Posterior cingulate gyrus (tissue), 11 donors: ENCODE measurements at regions of chr21 and their contacts with region 1.

Region 1: GRCh38 chr21:32826329-32827167 is 55.0 kb upstream of the PAXBP1 start:
- DNase-seq: peak in 3 of 10 donors; percentile 28 to 43 (median 28)

Region 2: GRCh38 chr21:32653311-32653901 is 173.1 kb before region 1 on chr21:
- intact Hi-C with region 1: loop called (anchors 5 kb)
- DNase-seq: no peak

Region 3: DNA sequence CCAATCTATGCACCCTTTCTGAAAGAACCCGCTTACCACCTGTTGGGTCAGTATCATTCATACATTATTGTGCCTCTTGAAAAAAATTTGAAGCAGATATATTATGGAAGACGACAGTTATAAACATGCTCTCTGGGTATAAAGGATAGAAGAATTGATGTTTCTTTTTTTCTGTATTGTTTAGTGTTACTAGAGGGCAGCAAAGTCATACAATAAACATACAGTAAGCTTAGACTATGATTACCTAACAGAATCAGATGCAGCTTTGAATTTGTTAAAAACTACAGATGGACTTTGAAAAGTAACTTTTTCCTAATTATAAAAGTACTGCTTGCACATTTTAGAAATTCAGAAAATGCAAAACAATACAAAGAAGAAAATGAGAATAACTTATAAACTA is 43.9 kb before region 1 on chr21:
- intact Hi-C with region 1: loop called (anchors 2 kb)
- DNase-seq: no peak

Region 4: DNA sequence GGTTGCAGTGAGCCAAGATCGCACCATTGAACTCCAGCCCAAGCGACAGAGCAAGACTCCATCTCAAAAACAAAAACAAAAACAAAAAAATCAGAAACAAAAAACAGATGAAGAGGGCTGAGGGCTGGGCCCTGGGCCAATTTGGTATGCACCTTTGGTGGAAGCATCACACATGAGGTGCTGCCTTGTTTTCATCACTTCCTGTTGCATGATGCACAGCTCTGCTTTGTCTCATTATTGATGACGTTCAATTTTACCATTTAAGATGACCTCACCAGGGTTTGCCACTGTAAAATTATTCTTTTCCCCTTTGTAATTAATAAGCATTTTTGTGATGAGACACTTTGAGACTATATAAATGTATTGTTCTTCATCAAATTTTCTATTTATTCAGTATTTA is 393.4 kb after region 1 on chr21:
- intact Hi-C with region 1: no loop called
- DNase-seq: no peak